Thyroid gland (tissue), 4 donors: ENCODE measurements at regions of chr5 and their contacts with region 1.

Region 1: GRCh38 chr5:88680253-88681132 is 202.5 kb downstream of the MEF2C start:
- DNase-seq: peak; percentile 66 to 68
- H3K4me3 ChIP-seq: peak overlapping the region in 1 of 3 donors; percentile 20
- H3K27ac ChIP-seq: no peak overlapping the region
- H3K4me1 ChIP-seq: peaks cover 11 to 13% of the 10 kb centered on the region in 2 donors
- H3K27me3 ChIP-seq: peaks cover 78% of the 10 kb centered on the region
- CTCF ChIP-seq: peak; percentile 55 to 99 (median 88)
- POLR2A ChIP-seq: no peak

Region 2: DNA sequence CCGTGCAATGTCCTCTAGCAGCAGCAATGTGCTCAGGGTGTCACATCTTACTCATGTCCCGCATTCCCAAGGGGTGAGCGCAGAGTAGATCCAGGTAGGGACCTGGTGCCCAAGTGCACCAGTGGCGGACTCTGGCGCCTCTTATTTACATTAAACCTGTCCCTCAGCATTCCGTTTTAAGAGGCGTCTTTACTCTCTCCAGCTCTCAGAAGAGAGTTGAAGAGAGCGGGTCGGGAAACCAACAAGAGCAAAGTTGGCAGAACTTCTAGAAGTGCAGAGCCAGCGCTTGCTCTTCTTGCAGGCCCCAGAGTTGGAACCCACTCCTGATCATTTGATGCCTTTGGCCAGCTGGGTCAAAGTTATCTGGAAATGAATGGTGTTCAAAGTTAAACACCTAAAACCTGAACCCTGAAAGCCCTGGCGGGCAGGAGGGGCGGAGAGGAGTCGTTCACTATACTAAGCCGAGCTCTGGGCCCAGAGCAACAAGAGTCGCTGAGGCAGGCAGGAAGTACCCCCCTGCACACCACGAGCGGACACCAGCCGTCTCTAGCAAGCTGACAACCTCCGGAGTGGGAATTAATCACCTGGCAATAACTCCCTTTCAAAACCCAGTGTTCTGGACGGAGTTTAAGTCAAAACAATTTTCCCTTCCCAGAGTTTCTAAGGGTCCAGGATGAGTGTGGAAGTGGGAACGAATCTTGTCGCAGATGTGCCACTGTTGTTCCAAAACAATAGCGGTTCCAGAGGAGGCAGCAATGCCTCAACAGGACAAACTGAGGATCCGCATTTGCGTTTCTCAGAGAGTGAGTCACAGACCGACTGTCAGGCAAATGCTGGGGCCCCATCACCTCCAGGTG is 534.7 kb before region 1 on chr5:
- intact Hi-C with region 1: loop called (anchors 5 kb)
- DNase-seq: peak; percentile 13 to 19
- H3K4me3 ChIP-seq: no peak overlapping the region
- H3K27ac ChIP-seq: no peak overlapping the region
- H3K4me1 ChIP-seq: peaks cover 10 to 16% of the 10 kb centered on the region in 2 donors
- H3K27me3 ChIP-seq: no peaks in the 10 kb centered on the region
- CTCF ChIP-seq: no peak
- POLR2A ChIP-seq: no peak

Region 3: GRCh38 chr5:88756953-88757352 is 76.5 kb after region 1 on chr5:
- intact Hi-C with region 1: no loop called
- DNase-seq: no peak
- H3K4me3 ChIP-seq: no peak overlapping the region
- H3K27ac ChIP-seq: no peak overlapping the region
- H3K4me1 ChIP-seq: no peaks in the 10 kb centered on the region
- H3K27me3 ChIP-seq: no peaks in the 10 kb centered on the region
- CTCF ChIP-seq: no peak
- POLR2A ChIP-seq: no peak